GM12878 (cell line): ENCODE measurements at regions of chr17 and their contacts with region 1.

Region 1: DNA sequence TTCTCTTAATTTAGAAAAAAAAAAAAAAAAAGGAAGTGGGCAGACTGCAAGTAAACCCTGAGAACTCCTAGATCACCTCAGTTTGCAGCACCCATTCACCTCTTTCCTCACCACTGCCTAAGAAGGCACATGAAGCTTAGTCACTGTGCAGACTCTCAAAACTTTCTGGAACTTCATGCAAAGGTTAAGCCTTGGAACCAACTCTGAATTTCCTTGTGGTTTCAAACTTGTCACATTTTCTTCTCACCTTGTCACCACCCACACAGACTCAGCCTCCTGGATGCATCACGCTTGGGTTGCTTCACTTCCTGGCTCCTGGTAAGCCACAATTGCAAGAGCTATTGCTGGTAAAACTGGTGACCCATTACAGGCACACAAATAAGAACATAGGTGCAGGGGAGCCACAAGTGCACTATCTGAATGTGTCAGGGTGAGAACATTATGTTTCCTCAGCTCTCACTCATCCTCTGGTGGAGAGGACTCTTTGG is 15.0 kb upstream of the CPD start:
- DNase-seq: peak; percentile 99
- ATAC-seq: peak; percentile 97
- H3K4me3 ChIP-seq: no peak overlapping the region
- H3K27ac ChIP-seq: no peak overlapping the region; the same call in 1 of the 2 replicates
- H3K4me1 ChIP-seq: peaks cover 16% of the 10 kb centered on the region
- H3K27me3 ChIP-seq: no peaks in the 10 kb centered on the region
- CTCF ChIP-seq: no peak
- EP300 ChIP-seq: peak in 1 of 2 experiments; percentile 86; a peak in 3 of 4 replicates
- POLR2A ChIP-seq: no peak
- RAD21 ChIP-seq: 0 out of 2 replicates have a peak, but pooled peaks have one; percentile 9

Region 2: GRCh38 chr17:30378824-30379302 is 15.1 kb after region 1 on chr17 and contains the start of gene CPD:
- CTCF ChIA-PET with region 1: interaction called, 5 read pairs
- POLR2A ChIA-PET with region 1: interaction called, 3 read pairs
- RAD21 ChIA-PET with region 1: interaction called, 7 read pairs
- SMC1A ChIA-PET with region 1: interaction called, 22 read pairs
- in situ Hi-C with region 1: no loop called
- intact Hi-C with region 1: no loop called
- DNase-seq: peak; percentile 69
- ATAC-seq: peak; percentile 90
- H3K4me3 ChIP-seq: peak within 1 kb of the TSS; percentile 82
- H3K27ac ChIP-seq: peak within 1 kb of the TSS; percentile 43
- H3K4me1 ChIP-seq: peaks cover 32% of the 10 kb centered on the region
- H3K27me3 ChIP-seq: no peaks in the 10 kb centered on the region
- CTCF ChIP-seq: no peak
- EP300 ChIP-seq: no peak
- POLR2A ChIP-seq: peak; percentile 91
- RAD21 ChIP-seq: no peak
- polyA plus RNA-seq, gene CPD: 3.5 to 4.5 TPM